Gastrocnemius medialis (tissue), 4 donors: ENCODE measurements at regions of chr16 and their contacts with region 1.

Region 1: DNA sequence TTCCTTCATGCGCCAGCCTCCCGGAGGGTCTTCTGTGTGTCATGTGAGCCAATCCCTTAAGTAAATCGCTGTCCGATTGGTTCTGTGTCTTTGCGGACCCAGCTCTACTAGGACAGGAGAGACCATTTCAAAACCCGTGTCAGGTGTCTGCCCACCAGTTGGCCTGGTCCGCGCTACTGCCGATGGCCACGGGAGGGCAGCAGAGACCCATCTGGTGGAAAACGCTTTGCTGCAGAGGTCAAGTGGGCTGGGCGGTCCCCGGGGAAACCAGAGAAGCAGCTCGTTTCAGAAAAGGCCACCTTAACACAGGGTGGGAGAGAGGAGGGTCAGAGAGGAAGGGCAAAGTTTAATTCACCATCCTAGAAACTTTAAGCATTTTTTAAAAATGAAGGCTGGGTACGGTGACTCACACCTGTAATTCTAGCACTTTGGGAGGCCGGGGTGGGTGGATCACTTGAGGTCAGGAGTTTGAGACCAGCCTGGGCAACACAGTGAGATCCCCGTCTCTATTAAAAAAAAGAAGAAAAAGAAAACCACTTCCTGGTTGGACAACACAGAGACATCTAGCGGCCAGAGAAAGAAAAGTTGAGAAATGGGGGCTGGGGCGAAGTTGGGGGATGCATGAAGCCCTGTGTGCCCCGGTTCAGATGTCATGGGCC is 2.8 kb upstream of the CIBAR2 start:
- DNase-seq: peak; percentile 77 to 89
- ATAC-seq: peak; percentile 93 to 97
- H3K4me3 ChIP-seq: peak overlapping the region in 1 of 4 donors; percentile 40
- H3K27ac ChIP-seq: peak overlapping the region; percentile 25 to 76 (median 70)
- H3K4me1 ChIP-seq: peaks cover 4 to 5% of the 10 kb centered on the region in 2 donors
- H3K27me3 ChIP-seq: no peaks in the 10 kb centered on the region
- CTCF ChIP-seq: peak; percentile 97 to 99 (median 99)
- POLR2A ChIP-seq: no peak

Region 2: DNA sequence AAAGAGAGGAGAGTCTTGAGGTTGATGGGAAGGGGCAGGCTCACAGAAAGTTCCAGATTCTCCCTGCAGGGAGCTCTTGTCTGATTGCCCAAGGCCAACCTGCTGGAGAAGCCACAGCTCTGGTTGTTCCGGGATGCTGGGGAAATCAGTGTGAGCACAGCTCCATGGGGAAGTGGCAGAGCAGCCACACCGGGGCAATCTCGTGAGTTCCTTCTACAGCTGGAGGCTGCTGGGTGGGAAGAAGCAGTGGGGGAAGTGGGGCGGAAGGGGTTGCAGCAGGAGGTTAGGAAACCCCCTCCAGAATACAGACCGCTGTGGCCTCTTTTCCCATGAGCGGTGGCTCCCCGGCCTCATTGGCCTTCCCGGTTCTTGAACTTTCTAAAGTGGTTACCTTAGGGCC is 53.5 kb before region 1 on chr16:
- in situ Hi-C with region 1: no loop called
- intact Hi-C with region 1: no loop called
- DNase-seq: peak; percentile 46 to 57
- ATAC-seq: peak; percentile 20 to 21
- H3K4me3 ChIP-seq: no peak overlapping the region
- H3K27ac ChIP-seq: no peak overlapping the region
- H3K4me1 ChIP-seq: no peaks in the 10 kb centered on the region
- H3K27me3 ChIP-seq: no peaks in the 10 kb centered on the region
- CTCF ChIP-seq: no peak
- POLR2A ChIP-seq: no peak

Region 3: DNA sequence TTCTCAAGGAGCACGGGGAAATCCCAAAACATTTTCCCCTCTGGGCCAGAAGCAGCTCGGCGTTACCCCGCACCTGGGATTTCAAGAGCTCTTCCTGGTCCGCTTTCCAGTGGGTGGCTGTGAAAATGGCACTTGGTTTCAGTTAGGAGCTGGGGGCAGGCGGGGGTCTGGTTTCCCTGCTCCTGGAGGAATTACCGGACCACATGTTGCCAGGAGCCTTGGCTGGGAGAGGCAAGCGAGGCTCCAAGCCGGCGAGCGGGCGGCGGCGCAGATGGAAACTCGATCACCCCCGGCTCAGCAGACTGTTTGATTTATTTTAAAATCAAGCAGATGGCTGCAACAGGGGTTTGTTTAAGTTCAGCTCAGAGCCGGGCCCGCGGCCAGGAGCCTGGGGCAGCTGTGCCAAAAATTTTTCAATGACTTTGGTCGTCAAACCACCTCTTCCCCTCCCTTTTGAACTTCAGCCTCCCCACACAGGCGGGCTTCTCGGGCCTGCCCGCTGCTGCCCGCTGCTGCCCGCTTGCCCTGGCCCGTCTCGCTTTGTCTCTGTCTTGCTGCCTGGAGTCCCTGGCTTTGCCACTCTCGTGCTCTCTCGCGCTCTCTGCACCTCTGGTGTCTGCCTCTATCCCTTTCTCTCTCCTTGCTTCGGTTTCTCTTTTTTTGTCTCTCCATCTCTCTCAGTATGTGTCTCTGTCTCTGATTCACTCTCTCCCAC is 105.2 kb after region 1 on chr16:
- in situ Hi-C with region 1: loop called in 2 of 4 experiments (anchors 25 kb)
- intact Hi-C with region 1: loop called (anchors 2 kb)
- DNase-seq: peak; percentile 70 to 89
- ATAC-seq: peak; percentile 92 to 93
- H3K4me3 ChIP-seq: peak overlapping the region; percentile 20 to 38 (median 32)
- H3K27ac ChIP-seq: peak overlapping the region; percentile 75 to 80 (median 78)
- H3K4me1 ChIP-seq: peaks cover 10 to 29% of the 10 kb centered on the region in 2 donors
- H3K27me3 ChIP-seq: no peaks in the 10 kb centered on the region
- CTCF ChIP-seq: peak in 1 of 5 experiments; percentile 15
- POLR2A ChIP-seq: no peak

Region 4: DNA sequence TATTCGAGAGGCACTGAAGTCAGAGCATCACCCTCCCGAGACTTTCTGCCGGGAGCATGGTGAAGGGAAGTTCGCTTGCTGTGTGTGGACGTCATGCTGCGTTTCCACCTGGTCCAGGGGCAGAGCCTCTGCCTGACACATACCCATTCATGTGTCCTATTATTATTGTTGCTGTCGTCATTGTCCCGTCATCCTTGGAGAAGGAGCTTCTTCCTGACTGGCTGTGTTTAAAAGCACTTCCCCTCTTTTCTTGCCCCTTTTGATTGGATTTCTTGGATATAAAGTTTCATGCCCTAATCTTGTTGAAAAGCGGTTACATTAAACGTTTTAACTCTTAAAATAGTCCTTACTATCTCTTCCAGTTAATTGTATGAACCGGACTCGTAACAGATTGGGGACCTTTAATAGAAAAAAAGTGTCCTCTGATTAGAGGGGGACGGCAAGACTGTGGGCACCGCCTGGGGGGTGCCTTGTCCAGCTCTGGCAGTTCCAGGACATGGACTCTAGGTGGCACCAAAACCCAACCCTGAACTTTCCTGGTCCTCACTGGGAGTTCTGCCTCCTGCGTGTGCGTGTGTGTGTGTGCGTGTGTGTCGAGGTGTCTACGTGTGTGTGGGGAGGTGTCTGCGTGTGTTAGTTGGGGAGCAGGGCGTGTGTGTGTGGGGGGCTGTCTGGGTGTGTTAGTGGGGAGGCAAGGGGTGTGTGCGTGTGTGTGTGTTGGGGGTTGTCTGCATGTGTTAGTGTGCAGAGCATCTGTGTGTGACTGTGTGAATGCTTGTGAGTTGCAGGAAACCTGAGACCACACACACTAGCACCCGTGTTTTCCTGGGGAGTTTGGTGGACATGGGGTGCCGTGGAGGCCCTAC is 130.5 kb after region 1 on chr16:
- in situ Hi-C with region 1: loop called in 2 of 4 experiments (anchors 25 kb)
- intact Hi-C with region 1: loop called (anchors 5 kb)
- DNase-seq: peak; percentile 15 to 46
- ATAC-seq: peak; percentile 72 to 76
- H3K4me3 ChIP-seq: no peak overlapping the region
- H3K27ac ChIP-seq: no peak overlapping the region
- H3K4me1 ChIP-seq: peaks cover 8 to 14% of the 10 kb centered on the region in 2 donors
- H3K27me3 ChIP-seq: no peaks in the 10 kb centered on the region
- CTCF ChIP-seq: peak; percentile 61 to 92 (median 77)
- POLR2A ChIP-seq: no peak